Activated naive CD4-positive, alpha-beta T cell treated with anti-CD3 and anti-CD28 coated beads for 36 hours (primary cell): ENCODE measurements at regions of chr18 and their contacts with region 1.

Region 1: DNA sequence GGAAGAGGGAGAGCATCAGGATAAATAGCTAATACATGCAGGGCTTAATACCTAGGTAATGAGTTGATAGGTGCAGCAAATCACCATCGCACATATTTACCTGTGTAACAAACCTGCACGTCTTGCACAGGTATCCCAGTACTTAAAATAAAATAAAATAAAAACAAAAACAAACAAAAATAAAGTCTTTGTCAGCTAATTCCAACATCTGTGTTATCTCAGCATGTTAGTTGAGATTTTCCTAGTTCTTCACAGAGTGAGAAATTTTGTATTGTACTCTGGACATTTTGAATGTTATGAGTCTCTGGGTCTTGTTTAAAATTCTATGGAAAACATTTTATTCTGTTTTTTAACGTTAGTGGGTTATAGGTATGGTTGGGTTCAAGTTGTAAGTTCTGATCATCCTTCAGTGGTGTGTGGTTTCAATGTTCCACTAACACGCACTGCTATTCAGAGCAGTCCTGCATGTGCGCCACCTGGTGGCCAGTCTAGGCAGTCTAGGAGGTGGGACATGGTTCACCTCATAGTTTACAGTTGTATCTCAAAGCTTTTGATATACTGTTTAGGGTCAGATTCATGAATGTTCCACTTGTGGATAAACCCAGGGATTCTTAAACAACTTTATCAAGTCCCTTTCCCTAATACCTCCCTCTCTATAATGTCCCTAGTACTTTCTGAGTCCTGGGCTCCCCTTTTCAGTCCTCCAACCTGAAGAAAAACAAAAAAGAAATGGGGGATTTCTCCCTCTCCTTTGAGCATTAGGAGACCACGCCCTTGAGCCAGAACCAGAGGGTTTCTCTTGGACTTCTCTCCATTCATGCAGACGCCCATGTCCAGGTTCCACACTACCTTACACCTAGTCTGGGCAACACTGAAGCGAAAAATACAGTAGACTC is 213.4 kb upstream of the GATA6 start:
- DNase-seq: peak; percentile 86
- H3K4me3 Mint-ChIP-seq: no peak overlapping the region
- H3K27ac Mint-ChIP-seq: no peak overlapping the region
- H3K4me1 Mint-ChIP-seq: no peaks in the 10 kb centered on the region
- H3K27me3 Mint-ChIP-seq: peaks cover 17% of the 10 kb centered on the region

Region 2: GRCh38 chr18:21194871-21195771 is 760.9 kb before region 1 on chr18:
- CTCF ChIA-PET with region 1: interaction called, 8 read pairs
- intact Hi-C with region 1: loop called (anchors 1 kb)
- DNase-seq: no peak
- H3K4me3 Mint-ChIP-seq: no peak overlapping the region
- H3K27ac Mint-ChIP-seq: no peak overlapping the region
- H3K4me1 Mint-ChIP-seq: no peaks in the 10 kb centered on the region
- H3K27me3 Mint-ChIP-seq: peaks cover 22% of the 10 kb centered on the region

Region 3: GRCh38 chr18:21489119-21489750 is 466.8 kb before region 1 on chr18:
- CTCF ChIA-PET with region 1: interaction called, 3 read pairs
- intact Hi-C with region 1: loop called (anchors 1 kb)
- DNase-seq: peak; percentile 52
- H3K4me3 Mint-ChIP-seq: no peak overlapping the region
- H3K27ac Mint-ChIP-seq: no peak overlapping the region
- H3K4me1 Mint-ChIP-seq: no peaks in the 10 kb centered on the region
- H3K27me3 Mint-ChIP-seq: peaks cover 6% of the 10 kb centered on the region

Region 4: DNA sequence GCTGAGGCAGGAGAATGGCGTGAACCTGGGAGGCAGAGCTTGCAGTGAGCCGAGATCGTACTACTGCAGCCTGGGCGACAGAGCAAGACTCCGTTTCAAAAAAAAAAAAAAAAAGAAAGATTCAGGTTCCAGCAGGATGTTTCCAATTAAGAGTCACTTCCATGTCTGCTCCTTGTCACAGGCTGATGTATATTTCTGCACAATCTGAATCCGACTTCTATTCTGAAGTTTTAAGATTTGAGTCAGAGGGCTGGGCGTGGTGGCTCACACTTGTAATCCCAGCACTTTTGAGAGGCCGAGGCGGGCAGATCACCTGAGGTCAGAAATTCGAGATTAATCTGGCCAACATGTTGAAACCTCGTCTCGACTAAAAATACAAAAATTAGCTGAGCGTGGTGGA is 319.2 kb before region 1 on chr18:
- CTCF ChIA-PET with region 1: interaction called, 3 read pairs
- intact Hi-C with region 1: loop called (anchors 5 kb)
- DNase-seq: no peak
- H3K4me3 Mint-ChIP-seq: no peak overlapping the region
- H3K27ac Mint-ChIP-seq: no peak overlapping the region
- H3K4me1 Mint-ChIP-seq: peaks cover 12% of the 10 kb centered on the region
- H3K27me3 Mint-ChIP-seq: no peaks in the 10 kb centered on the region

Region 5: DNA sequence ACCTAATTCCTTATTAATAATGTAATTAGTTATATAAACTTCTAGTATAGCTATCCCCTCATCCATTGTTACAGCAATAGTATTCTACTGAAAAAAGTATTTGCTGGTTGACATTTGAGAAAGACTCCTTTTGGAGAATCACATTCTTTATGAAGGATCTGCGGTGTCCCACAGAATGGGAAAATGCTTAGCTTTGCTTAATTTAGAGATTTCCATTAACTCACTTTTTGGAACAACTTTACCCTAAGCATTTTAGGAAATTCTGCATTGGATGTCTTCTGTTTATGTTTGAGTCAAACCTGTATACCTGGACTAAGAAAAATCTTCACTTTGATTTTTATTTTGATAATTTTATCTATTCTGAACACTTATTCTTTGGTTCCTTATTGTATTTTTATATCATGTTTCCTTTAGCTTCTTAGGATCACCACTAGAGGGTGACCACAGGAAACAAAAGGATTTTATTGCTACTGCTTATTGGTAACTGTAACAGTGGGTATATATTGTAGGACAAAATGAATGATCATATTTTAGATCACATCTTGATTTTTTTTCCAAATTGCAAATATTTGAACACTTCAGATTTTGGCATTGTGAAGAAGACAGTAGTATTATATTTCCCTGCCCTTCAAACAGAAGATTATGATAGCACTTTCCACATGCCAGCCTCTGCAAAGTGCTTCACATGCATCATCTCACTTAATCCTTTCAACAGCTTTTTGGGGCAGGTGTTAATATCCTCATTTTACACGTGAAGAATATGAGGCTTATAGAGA is 135.8 kb before region 1 on chr18:
- CTCF ChIA-PET with region 1: no interaction called
- intact Hi-C with region 1: loop called (anchors 10 kb)
- DNase-seq: no peak
- H3K4me3 Mint-ChIP-seq: no peak overlapping the region
- H3K27ac Mint-ChIP-seq: no peak overlapping the region
- H3K4me1 Mint-ChIP-seq: no peaks in the 10 kb centered on the region
- H3K27me3 Mint-ChIP-seq: no peaks in the 10 kb centered on the region

Region 6: DNA sequence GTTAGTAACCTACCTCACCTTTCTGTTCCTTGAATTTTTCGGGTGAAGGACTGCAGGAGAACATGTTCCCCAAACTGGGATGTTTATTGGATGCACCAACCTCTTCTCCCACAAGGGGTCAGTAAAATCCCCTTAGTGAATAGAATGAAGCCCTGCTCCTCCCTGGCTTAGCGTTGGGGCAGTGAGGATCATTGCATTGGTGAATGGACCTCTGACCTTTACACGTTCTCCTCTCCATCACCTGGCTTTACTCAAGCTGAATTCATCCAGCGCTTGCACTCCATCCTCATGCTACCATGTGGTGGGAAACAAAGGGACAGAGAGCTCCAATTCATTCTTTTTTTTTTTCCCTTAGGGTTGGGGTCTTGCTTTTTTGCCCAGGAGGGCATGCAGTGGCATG is 58.2 kb before region 1 on chr18:
- CTCF ChIA-PET with region 1: interaction called, 6 read pairs
- intact Hi-C with region 1: loop called (anchors 1 kb)
- DNase-seq: peak; percentile 46
- H3K4me3 Mint-ChIP-seq: no peak overlapping the region
- H3K27ac Mint-ChIP-seq: no peak overlapping the region
- H3K4me1 Mint-ChIP-seq: peaks cover 5% of the 10 kb centered on the region
- H3K27me3 Mint-ChIP-seq: peaks cover 11% of the 10 kb centered on the region

Region 7: GRCh38 chr18:21914739-21915319 is 41.2 kb before region 1 on chr18:
- CTCF ChIA-PET with region 1: interaction called, 4 read pairs
- intact Hi-C with region 1: loop called (anchors 5 kb)
- DNase-seq: no peak
- H3K4me3 Mint-ChIP-seq: no peak overlapping the region
- H3K27ac Mint-ChIP-seq: no peak overlapping the region
- H3K4me1 Mint-ChIP-seq: no peaks in the 10 kb centered on the region
- H3K27me3 Mint-ChIP-seq: peaks cover 4% of the 10 kb centered on the region

Region 8: DNA sequence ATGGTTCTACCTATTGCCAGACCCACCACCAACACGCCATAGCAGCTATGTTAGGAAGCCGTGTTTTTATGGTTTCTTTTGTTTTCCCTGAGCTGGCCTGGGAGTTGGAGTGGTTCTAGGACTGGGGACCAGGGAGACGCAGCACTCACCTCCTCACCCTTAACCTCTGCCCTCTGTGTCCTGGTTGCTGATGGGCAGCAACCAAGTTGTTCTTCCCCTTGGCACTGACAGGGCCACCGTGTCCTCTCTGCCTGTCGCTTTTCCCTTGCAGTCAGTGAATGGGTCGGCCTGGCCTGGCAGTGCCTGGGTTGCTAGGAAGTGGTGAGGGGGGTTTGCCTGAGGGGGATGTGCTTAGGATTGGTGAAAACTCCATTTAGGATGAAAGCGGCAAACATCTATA is 16.3 kb after region 1 on chr18:
- CTCF ChIA-PET with region 1: no interaction called
- intact Hi-C with region 1: no loop called
- DNase-seq: no peak
- H3K4me3 Mint-ChIP-seq: no peak overlapping the region
- H3K27ac Mint-ChIP-seq: no peak overlapping the region
- H3K4me1 Mint-ChIP-seq: no peaks in the 10 kb centered on the region
- H3K27me3 Mint-ChIP-seq: peaks cover 3% of the 10 kb centered on the region